SK-N-SH (cell line): ENCODE measurements at regions of chr2 and their contacts with region 1.

Region 1: DNA sequence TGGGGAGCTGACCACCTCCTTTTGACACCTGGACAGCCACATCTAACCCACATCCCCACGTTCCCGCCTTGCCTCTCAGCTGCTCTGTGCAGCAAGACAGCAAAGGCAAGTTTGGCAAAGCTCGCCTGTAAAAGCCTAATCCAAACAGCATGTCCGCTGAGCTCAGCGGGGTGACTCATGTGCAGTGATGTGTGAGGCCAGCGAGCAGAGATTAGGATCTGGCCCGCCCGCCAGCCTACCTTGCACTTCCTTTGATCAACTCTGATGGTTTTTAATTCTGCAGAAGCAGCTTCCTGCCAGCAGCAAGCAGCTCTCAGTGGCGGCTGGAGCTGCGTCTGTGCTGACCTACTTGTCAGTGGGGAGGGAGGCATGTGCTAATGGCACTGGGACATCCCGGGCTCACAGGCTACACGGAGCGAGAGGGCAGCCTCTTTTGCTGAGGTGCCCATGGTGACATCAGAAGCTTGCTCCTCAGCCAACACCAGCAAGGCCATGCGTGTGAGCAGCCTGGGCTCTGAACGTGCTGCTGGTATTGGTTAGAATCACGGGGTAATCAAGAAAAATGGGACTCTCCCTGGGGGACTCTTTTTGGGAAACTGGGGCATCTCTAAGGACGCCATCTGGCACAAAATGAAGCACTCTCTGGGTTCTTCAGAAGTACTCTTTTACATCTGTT is 36.0 kb upstream of the EML4 start:
- DNase-seq: peak; percentile 85
- H3K4me3 ChIP-seq: peak overlapping the region; percentile 36 to 46
- H3K27ac ChIP-seq: peak overlapping the region; percentile 87 to 100
- H3K4me1 ChIP-seq: peaks cover 51 to 65% of the 10 kb centered on the region in 2 experiments
- H3K27me3 ChIP-seq: no peaks in the 10 kb centered on the region
- CTCF ChIP-seq: no peak
- EP300 ChIP-seq: peak; percentile 97 to 98
- RAD21 ChIP-seq: peak; percentile 57; the same call in 1 of the 2 replicates

Region 2: GRCh38 chr2:41933585-41934320 is 199.4 kb before region 1 on chr2:
- CTCF ChIA-PET with region 1: no interaction called
- POLR2A ChIA-PET with region 1: no interaction called
- DNase-seq: no peak
- H3K4me3 ChIP-seq: no peak overlapping the region
- H3K27ac ChIP-seq: no peak overlapping the region
- H3K4me1 ChIP-seq: peaks cover 13 to 50% of the 10 kb centered on the region in 2 experiments; a peak in 3 of 4 replicates
- H3K27me3 ChIP-seq: no peaks in the 10 kb centered on the region
- CTCF ChIP-seq: no peak
- EP300 ChIP-seq: no peak
- RAD21 ChIP-seq: no peak

Region 3: GRCh38 chr2:42028571-42029148 is 104.4 kb before region 1 on chr2:
- CTCF ChIA-PET with region 1: no interaction called
- POLR2A ChIA-PET with region 1: no interaction called
- DNase-seq: no peak
- H3K4me3 ChIP-seq: no peak overlapping the region
- H3K27ac ChIP-seq: no peak overlapping the region
- H3K4me1 ChIP-seq: peaks cover 30 to 32% of the 10 kb centered on the region in 2 experiments
- H3K27me3 ChIP-seq: no peaks in the 10 kb centered on the region
- CTCF ChIP-seq: no peak
- EP300 ChIP-seq: no peak
- RAD21 ChIP-seq: no peak

Region 4: GRCh38 chr2:42117923-42118753 is 15.0 kb before region 1 on chr2:
- CTCF ChIA-PET with region 1: interaction called, 10 read pairs
- POLR2A ChIA-PET with region 1: interaction called, 18 read pairs
- DNase-seq: no peak
- H3K4me3 ChIP-seq: peak overlapping the region in 1 of 2 experiments; percentile 9; a peak in 1 of 4 replicates
- H3K27ac ChIP-seq: peak overlapping the region; percentile 86 to 94
- H3K4me1 ChIP-seq: peaks cover 21 to 30% of the 10 kb centered on the region in 2 experiments
- H3K27me3 ChIP-seq: no peaks in the 10 kb centered on the region
- CTCF ChIP-seq: no peak
- EP300 ChIP-seq: peak; percentile 52 to 74; a peak in 3 of 4 replicates
- RAD21 ChIP-seq: no peak; the same call in 1 of the 2 replicates

Region 5: GRCh38 chr2:42147641-42148274 is 14.7 kb after region 1 on chr2:
- CTCF ChIA-PET with region 1: interaction called, 5 read pairs
- POLR2A ChIA-PET with region 1: interaction called, 27 read pairs
- DNase-seq: peak; percentile 71
- H3K4me3 ChIP-seq: no peak overlapping the region
- H3K27ac ChIP-seq: peak overlapping the region; percentile 27 to 91; a peak in 3 of 4 replicates
- H3K4me1 ChIP-seq: peaks cover 12 to 17% of the 10 kb centered on the region in 2 experiments
- H3K27me3 ChIP-seq: no peaks in the 10 kb centered on the region
- CTCF ChIP-seq: no peak
- EP300 ChIP-seq: peak; percentile 35 to 73; a peak in 3 of 4 replicates
- RAD21 ChIP-seq: no peak

Region 6: GRCh38 chr2:42169100-42169873 is 36.2 kb after region 1 on chr2 and contains the start of gene EML4:
- CTCF ChIA-PET with region 1: interaction called, 7 read pairs
- POLR2A ChIA-PET with region 1: interaction called, 11 read pairs
- DNase-seq: peak; percentile 98
- H3K4me3 ChIP-seq: peak within 1 kb of the TSS; percentile 81 to 100
- H3K27ac ChIP-seq: peak within 1 kb of the TSS; percentile 72 to 92
- H3K4me1 ChIP-seq: peaks cover 16 to 24% of the 10 kb centered on the region in 2 experiments; a peak in 3 of 4 replicates
- H3K27me3 ChIP-seq: no peaks in the 10 kb centered on the region
- CTCF ChIP-seq: no peak
- EP300 ChIP-seq: no peak
- RAD21 ChIP-seq: 0 out of 2 replicates have a peak, but pooled peaks have one; percentile 8
- polyA plus RNA-seq, gene EML4: 35.0 and 45.8 TPM in 2 replicates

Region 7: GRCh38 chr2:43358410-43359201 is 1225.5 kb after region 1 on chr2:
- CTCF ChIA-PET with region 1: no interaction called
- POLR2A ChIA-PET with region 1: no interaction called
- DNase-seq: no peak
- H3K4me3 ChIP-seq: no peak overlapping the region
- H3K27ac ChIP-seq: peak overlapping the region in 1 of 2 experiments; percentile 51; a peak in 2 of 4 replicates
- H3K4me1 ChIP-seq: peaks cover 0 to 14% of the 10 kb centered on the region in 2 experiments; a peak in 3 of 4 replicates
- H3K27me3 ChIP-seq: no peaks in the 10 kb centered on the region
- CTCF ChIP-seq: no peak
- EP300 ChIP-seq: no peak
- RAD21 ChIP-seq: no peak